Breast epithelium (tissue), 4 donors: ENCODE measurements at regions of chr11 and their contacts with region 1.

Region 1: DNA sequence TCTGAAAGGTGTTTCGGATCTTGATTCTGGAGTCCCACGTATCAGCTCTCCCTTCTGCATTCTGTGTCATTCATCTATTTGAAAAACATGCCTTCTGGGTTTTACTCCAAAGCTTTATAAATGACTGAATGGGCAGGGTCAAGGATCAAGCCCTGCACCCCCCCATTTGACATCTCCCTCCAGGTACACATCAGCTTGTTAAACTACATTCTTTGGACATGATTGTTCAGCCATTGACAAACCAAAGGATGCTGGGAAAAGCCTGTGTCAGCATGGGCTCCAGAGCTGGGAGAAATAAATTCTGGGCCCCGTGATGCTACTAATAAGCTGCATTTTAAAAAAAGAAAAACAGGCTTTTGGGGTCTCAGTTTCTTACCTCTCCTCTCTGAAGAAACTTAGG is 103.7 kb downstream of the DSCAML1 start:
- DNase-seq: no peak
- H3K4me3 ChIP-seq: no peak overlapping the region
- H3K27ac ChIP-seq: no peak overlapping the region
- H3K4me1 ChIP-seq: no peaks in the 10 kb centered on the region
- H3K27me3 ChIP-seq: no peaks in the 10 kb centered on the region
- CTCF ChIP-seq: no peak
- POLR2A ChIP-seq: no peak

Region 2: GRCh38 chr11:117649296-117650055 is 43.9 kb before region 1 on chr11:
- intact Hi-C with region 1: loop called (anchors 2 kb)
- DNase-seq: no peak
- H3K4me3 ChIP-seq: no peak overlapping the region
- H3K27ac ChIP-seq: no peak overlapping the region
- H3K4me1 ChIP-seq: no peaks in the 10 kb centered on the region
- H3K27me3 ChIP-seq: no peaks in the 10 kb centered on the region
- CTCF ChIP-seq: no peak
- POLR2A ChIP-seq: no peak

Region 3: DNA sequence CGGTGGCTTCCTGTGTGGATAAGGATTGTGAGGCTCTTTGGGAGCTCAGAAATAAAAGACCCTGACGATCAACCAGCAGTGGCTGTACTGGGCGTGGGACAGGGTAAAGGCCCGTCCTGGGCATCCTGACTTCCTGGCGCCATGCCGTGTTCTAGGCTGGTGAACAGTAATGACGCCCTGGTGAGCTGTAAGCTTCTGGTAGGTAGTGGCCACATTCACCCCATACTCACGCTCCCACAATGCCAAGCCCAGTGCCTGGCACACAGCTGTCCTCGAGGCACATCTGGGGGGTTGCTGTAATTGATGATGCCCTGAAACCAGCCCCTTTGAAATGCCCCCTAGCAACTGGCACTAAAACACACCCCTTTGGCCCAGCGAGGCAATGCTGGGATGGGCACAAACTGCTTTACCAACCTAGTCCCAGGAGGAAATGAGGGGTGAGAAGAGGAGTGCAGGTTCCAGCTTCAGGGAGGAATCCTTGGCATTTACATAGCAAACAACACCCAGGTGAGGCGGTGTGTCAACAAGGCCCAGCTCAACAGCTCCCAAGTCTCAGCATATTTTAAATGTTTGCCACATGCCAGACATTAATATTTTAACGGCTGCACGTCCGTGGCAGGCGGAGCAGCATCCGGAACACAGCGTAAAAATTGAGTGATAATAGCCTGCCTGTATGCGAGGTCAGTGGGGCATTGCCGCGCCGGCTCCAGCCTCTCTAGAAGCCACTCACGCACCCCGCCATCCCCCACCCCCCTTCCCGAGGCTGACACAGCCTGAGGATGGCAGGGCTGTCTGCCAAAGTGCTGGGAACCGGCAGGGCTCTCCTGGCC is 24.4 kb after region 1 on chr11:
- intact Hi-C with region 1: no loop called
- DNase-seq: peak; percentile 21 to 67
- H3K4me3 ChIP-seq: no peak overlapping the region
- H3K27ac ChIP-seq: peak overlapping the region; percentile 45 to 48
- H3K4me1 ChIP-seq: no peaks in the 10 kb centered on the region
- H3K27me3 ChIP-seq: no peaks in the 10 kb centered on the region
- CTCF ChIP-seq: no peak
- POLR2A ChIP-seq: no peak